OCI-LY7 (cell line): ENCODE measurements at regions of chr16 and their contacts with region 1.

Region 1: DNA sequence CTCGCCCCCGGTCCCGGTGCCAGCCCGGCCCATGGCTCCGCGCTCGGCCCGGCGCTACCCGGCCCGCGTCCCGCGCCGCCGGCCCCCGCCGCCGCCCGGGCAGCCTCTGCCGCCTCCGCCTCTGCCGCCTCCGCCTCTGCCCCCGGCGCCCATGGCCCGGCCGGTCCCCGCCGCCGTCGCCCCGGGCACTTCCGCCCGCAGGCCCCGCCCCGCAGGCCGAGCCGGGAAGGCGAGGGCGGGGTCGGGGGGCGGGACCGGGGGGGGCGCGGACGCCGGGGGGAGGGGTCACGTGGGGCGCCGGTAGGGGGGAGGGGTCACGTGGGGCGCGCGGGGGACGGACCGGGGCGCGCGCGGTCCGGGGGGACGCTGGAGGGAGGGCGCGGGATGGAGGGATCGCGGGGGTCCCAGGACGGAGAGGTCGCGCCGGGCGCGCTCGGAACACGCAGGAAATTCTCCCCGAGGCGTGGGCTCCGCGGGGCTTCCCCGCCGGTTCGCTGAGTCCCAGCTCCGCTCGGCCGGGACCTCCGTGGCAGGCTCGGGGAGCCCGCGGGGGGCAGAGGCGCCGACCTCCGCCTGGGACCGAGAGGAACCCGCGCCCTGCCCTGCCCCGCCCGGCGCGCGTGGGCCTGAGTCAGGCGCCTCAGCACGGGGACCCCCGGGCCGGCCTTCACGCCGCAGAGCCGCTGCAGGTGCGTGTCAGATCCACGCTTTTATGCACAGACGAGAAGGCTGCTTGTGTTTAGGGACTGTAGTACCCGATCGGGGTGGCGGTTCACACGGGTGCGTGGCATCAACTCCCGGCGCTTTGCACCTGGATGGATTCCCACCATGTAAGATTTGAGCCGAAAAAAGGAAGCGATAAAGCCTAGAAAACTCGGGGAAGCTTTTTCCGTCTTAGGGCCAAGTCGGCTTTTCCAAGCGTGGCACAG is at the start of gene PGAP6:
- DNase-seq: peak; percentile 83
- H3K4me3 ChIP-seq: peak within 1 kb of the TSS; percentile 97
- H3K27ac ChIP-seq: peak within 1 kb of the TSS; percentile 89
- H3K4me1 ChIP-seq: peaks cover 13% of the 10 kb centered on the region
- CTCF ChIP-seq: no peak
- total RNA-seq, gene PGAP6: 40.1 and 50.6 TPM in 2 replicates

Region 2: GRCh38 chr16:352547-353403 is 29.3 kb before region 1 on chr16 and contains the start of gene AXIN1:
- CTCF ChIA-PET with region 1: no interaction called
- POLR2A ChIA-PET with region 1: interaction called, 6 read pairs
- intact Hi-C with region 1: loop called (anchors 1 kb)
- DNase-seq: peak; percentile 98
- H3K4me3 ChIP-seq: peak within 1 kb of the TSS; percentile 96
- H3K27ac ChIP-seq: no peak within 1 kb of the TSS
- H3K4me1 ChIP-seq: peaks cover 22% of the 10 kb centered on the region
- CTCF ChIP-seq: no peak; the same call in 1 of the 2 replicates
- total RNA-seq, gene AXIN1: 30.3 and 30.6 TPM in 2 replicates

Region 3: DNA sequence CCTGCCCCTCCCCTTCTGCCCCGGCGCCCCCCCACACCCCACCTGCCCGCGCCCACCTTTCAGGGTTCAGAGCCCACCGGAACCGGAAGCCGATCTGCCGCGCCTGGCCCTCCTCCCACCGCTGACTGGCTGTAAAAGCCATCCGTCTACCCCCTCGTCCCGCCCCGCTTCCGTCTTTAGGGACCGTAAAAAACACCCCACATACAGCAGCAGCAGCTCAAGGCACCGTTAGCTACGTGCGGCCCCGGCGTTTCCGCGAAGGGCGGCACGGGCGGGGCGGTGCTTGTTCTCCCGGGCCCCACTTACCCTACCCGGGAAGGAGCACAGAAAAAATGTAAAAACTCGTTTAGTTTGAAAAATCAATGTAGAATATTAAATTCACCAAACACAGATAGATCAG is 11.6 kb before region 1 on chr16 and contains the start of gene MRPL28:
- CTCF ChIA-PET with region 1: no interaction called
- POLR2A ChIA-PET with region 1: interaction called, 10 read pairs
- intact Hi-C with region 1: no loop called
- DNase-seq: peak; percentile 96
- H3K4me3 ChIP-seq: peak within 1 kb of the TSS; percentile 51
- H3K27ac ChIP-seq: peak within 1 kb of the TSS; percentile 52
- H3K4me1 ChIP-seq: peaks cover 12% of the 10 kb centered on the region
- CTCF ChIP-seq: no peak
- total RNA-seq, gene MRPL28: 113 and 134 TPM in 2 replicates

Region 4: DNA sequence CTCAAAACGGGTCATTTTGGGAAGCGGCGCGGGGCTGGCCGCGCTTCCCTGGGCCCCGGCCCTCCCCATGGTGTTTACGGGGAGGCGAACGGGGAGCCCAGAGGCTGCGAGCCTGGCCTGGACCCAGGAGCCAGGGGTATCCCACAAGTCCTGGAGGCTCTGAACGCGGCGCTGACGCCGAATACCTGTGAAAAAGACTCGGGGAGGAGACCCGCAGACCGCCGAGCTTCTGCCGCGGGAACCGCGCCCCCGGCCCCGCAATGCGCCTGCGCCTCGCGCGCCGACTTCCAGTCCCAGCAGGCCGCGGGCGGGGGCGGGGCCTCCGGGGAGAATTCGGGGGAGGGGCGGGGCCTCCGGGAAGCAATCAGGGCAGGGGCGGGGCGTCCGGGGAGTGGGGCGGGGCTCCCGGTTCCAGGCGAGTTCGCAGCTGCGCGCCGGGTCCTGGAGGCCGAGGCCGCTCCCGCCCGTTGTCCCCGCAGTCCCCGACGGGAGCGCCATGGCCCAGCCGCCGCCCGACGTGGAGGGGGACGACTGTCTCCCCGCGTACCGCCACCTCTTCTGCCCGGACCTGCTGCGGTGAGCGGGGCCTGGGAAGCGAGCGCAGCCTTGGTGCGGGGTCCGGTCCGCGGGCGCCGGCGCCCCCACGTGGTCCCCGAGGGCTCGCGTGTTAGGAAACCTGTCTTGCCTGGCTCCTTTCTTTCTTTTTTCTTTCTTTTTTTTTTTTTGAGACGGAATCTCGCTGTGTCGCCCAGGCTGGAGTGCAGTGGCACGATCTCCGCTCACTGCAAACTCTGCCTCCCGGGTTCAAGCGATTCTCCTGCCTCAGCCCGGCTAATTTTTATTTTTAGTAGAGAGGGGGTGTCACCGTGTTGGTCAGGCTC is 19.7 kb after region 1 on chr16 and contains the start of gene DECR2:
- CTCF ChIA-PET with region 1: no interaction called
- POLR2A ChIA-PET with region 1: interaction called, 5 read pairs
- intact Hi-C with region 1: loop called (anchors 2 kb)
- DNase-seq: peak; percentile 93
- H3K4me3 ChIP-seq: peak within 1 kb of the TSS; percentile 74
- H3K27ac ChIP-seq: peak within 1 kb of the TSS; percentile 54
- H3K4me1 ChIP-seq: peaks cover 22% of the 10 kb centered on the region
- CTCF ChIP-seq: peak; percentile 74
- total RNA-seq, gene DECR2: 7.5 and 8.0 TPM in 2 replicates

Region 5: DNA sequence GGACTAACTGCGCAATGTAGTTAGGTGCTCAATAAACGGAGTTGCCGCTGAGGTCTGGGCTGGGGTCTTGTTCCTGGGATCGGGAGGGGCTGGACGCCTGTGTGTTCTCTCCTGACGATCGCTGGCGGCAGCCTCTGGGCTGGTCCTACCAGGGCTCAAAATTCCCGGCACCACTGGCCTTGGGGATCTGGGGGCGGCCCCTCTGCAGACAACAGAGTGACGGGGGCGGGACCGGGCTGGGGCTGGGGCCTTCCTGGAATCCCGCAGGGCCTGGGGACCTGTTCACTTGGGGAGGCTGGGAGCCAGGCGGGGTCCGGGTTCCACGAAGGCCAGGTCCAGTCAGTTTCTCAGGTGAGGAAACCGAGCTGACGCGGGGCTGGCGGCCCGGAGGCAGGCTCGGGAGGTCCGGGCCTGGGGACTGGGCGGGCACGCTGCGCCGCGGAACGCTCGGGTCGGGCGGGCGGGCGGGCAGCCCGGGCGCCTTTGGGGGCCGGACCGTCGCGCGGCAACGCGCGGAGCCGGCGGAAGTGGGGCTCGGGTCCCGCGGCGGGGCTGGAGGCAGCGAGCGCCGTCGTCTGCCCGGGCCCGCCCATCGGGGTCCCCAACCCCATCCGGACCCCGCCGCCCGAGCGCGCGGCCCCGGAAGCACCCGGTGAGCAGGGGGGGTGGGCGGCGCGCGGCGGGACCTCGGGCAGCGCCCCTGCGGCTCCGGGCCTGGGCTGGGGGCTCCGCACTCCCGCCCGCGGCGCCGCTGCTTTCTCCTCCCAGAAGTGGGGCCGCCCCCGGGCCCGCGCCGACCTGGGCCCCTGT is 187.6 kb after region 1 on chr16 and contains the start of gene PIGQ:
- CTCF ChIA-PET with region 1: no interaction called
- POLR2A ChIA-PET with region 1: no interaction called
- intact Hi-C with region 1: loop called (anchors 5 kb)
- DNase-seq: peak; percentile 79
- H3K4me3 ChIP-seq: peak within 1 kb of the TSS; percentile 94
- H3K27ac ChIP-seq: peak within 1 kb of the TSS; percentile 22
- H3K4me1 ChIP-seq: peaks cover 35% of the 10 kb centered on the region
- CTCF ChIP-seq: no peak
- total RNA-seq, gene PIGQ: 32.3 and 39.0 TPM in 2 replicates